Sigmoid colon (tissue), 7 donors: ENCODE measurements at regions of chr2 and their contacts with region 1.

Region 1: GRCh38 chr2:204024503-204024902 is 87.9 kb downstream of the ICOS start:
- DNase-seq: no peak
- H3K4me3 ChIP-seq: no peak overlapping the region
- H3K27ac ChIP-seq: peak overlapping the region in 2 of 4 donors; percentile 24 to 46
- H3K4me1 ChIP-seq: peaks cover 0 to 30% (median 18%) of the 10 kb centered on the region in 4 donors
- H3K27me3 ChIP-seq: no peaks in the 10 kb centered on the region
- CTCF ChIP-seq: peak; percentile 45 to 63 (median 58)
- EP300 ChIP-seq: no peak
- POLR2A ChIP-seq: no peak

Region 2: DNA sequence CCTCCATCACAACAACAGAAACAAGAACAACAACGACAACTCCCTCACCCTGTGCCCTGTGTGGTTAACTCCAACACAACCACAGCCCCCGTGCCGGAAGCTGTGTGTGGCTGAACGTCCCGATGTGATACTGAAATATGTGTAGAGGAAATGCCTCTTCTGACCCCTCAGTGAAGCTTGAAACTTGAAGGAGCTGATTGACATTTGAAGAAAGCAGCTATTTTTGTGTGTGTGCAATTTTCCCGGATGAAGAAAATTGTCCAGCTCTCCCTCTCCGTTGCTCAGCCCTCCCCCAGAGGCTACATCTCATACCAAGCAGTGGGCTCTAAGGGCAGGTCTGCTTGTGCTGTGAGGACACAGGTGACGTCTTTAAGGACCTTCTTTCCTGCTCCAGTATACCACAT is 85.8 kb after region 1 on chr2:
- intact Hi-C with region 1: loop called (anchors 10 kb)
- DNase-seq: no peak
- H3K4me3 ChIP-seq: no peak overlapping the region
- H3K27ac ChIP-seq: peak overlapping the region in 3 of 4 donors; percentile 9 to 63 (median 60)
- H3K4me1 ChIP-seq: peaks cover 0 to 62% (median 45%) of the 10 kb centered on the region in 4 donors
- H3K27me3 ChIP-seq: no peaks in the 10 kb centered on the region
- CTCF ChIP-seq: no peak
- EP300 ChIP-seq: no peak
- POLR2A ChIP-seq: no peak